ENCODE measurements at regions of chr1 and their contacts with region 1.

Region 1: DNA sequence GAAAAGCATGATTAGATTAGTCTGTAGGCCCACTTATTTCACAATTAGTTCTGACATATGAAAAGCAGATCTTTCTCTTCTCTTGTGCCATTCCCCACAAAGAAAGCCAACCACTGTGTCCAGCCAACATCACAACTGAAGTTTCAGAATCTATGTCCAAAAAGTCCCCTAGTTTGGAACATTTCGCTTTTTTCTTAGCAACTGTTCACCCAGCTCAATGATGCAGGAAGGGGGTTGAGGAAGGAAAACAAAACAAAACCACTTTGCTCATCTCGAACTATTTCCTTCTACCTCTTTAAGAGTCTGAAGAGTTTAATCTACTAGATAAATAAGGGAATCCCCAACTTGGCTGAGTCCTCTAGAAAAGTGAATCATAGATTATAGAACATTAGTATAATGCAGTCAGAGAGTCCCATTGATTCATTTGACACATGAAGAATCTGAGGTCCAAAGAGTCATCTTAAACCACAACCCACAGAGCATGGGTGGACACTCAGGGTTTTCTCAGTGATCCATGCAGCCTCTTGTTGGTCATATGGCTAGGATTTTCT is 159.3 kb upstream of the SGIP1 start:
- DNase-seq: peak; percentile 96
- ATAC-seq: peak; percentile 66
- H3K4me3 ChIP-seq: no peak overlapping the region
- H3K27ac ChIP-seq: peak overlapping the region; percentile 92
- H3K4me1 ChIP-seq: peaks cover 65% of the 10 kb centered on the region
- H3K27me3 ChIP-seq: no peaks in the 10 kb centered on the region
- CTCF ChIP-seq: no peak
- EP300 ChIP-seq: peak; percentile 75 to 85; a peak in 3 of 4 replicates
- POLR2A ChIP-seq: no peak
- RAD21 ChIP-seq: peak; percentile 16

Region 2: GRCh38 chr1:66262211-66262963 is 112.2 kb before region 1 on chr1:
- CTCF ChIA-PET with region 1: interaction called, 15 read pairs
- POLR2A ChIA-PET with region 1: no interaction called
- RAD21 ChIA-PET with region 1: interaction called, 3 read pairs
- SMC1A ChIA-PET with region 1: interaction called, 75 read pairs
- in situ Hi-C with region 1: no loop called
- intact Hi-C with region 1: no loop called
- DNase-seq: no peak
- ATAC-seq: no peak
- H3K4me3 ChIP-seq: no peak overlapping the region
- H3K27ac ChIP-seq: no peak overlapping the region
- H3K4me1 ChIP-seq: peaks cover 4% of the 10 kb centered on the region; the same call in 1 of the 2 replicates
- H3K27me3 ChIP-seq: no peaks in the 10 kb centered on the region
- CTCF ChIP-seq: no peak
- EP300 ChIP-seq: no peak
- POLR2A ChIP-seq: no peak
- RAD21 ChIP-seq: no peak

Region 3: GRCh38 chr1:66339944-66340343 is 34.7 kb before region 1 on chr1:
- CTCF ChIA-PET with region 1: interaction called, 29 read pairs
- POLR2A ChIA-PET with region 1: interaction called, 6 read pairs
- RAD21 ChIA-PET with region 1: interaction called, 113 read pairs
- SMC1A ChIA-PET with region 1: interaction called, 463 read pairs
- in situ Hi-C with region 1: no loop called
- intact Hi-C with region 1: loop called (anchors 2 kb)
- DNase-seq: no peak
- ATAC-seq: peak; percentile 8
- H3K4me3 ChIP-seq: peak overlapping the region; percentile 42
- H3K27ac ChIP-seq: peak overlapping the region; percentile 83
- H3K4me1 ChIP-seq: peaks cover 21% of the 10 kb centered on the region
- H3K27me3 ChIP-seq: no peaks in the 10 kb centered on the region
- CTCF ChIP-seq: no peak
- EP300 ChIP-seq: no peak
- POLR2A ChIP-seq: no peak
- RAD21 ChIP-seq: no peak

Region 4: GRCh38 chr1:66396212-66396890 is 21.7 kb after region 1 on chr1:
- CTCF ChIA-PET with region 1: interaction called, 32 read pairs
- POLR2A ChIA-PET with region 1: interaction called, 19 read pairs
- RAD21 ChIA-PET with region 1: interaction called, 74 read pairs
- SMC1A ChIA-PET with region 1: interaction called, 253 read pairs
- in situ Hi-C with region 1: no loop called
- intact Hi-C with region 1: loop called (anchors 1 kb)
- DNase-seq: peak; percentile 71
- ATAC-seq: peak; percentile 76
- H3K4me3 ChIP-seq: no peak overlapping the region
- H3K27ac ChIP-seq: peak overlapping the region; percentile 80
- H3K4me1 ChIP-seq: peaks cover 75% of the 10 kb centered on the region
- H3K27me3 ChIP-seq: no peaks in the 10 kb centered on the region
- CTCF ChIP-seq: no peak
- EP300 ChIP-seq: peak in 1 of 2 experiments; percentile 52; a peak in 2 of 4 replicates
- POLR2A ChIP-seq: no peak
- RAD21 ChIP-seq: no peak; the same call in 1 of the 2 replicates

Region 5: GRCh38 chr1:66831529-66832239 is 457.0 kb after region 1 on chr1:
- CTCF ChIA-PET with region 1: no interaction called
- POLR2A ChIA-PET with region 1: no interaction called
- RAD21 ChIA-PET with region 1: no interaction called
- SMC1A ChIA-PET with region 1: no interaction called
- in situ Hi-C with region 1: no loop called
- intact Hi-C with region 1: no loop called
- DNase-seq: no peak
- ATAC-seq: no peak
- H3K4me3 ChIP-seq: no peak overlapping the region
- H3K27ac ChIP-seq: no peak overlapping the region
- H3K4me1 ChIP-seq: no peaks in the 10 kb centered on the region
- H3K27me3 ChIP-seq: no peaks in the 10 kb centered on the region
- CTCF ChIP-seq: no peak
- EP300 ChIP-seq: no peak
- POLR2A ChIP-seq: no peak
- RAD21 ChIP-seq: no peak

Region 6: DNA sequence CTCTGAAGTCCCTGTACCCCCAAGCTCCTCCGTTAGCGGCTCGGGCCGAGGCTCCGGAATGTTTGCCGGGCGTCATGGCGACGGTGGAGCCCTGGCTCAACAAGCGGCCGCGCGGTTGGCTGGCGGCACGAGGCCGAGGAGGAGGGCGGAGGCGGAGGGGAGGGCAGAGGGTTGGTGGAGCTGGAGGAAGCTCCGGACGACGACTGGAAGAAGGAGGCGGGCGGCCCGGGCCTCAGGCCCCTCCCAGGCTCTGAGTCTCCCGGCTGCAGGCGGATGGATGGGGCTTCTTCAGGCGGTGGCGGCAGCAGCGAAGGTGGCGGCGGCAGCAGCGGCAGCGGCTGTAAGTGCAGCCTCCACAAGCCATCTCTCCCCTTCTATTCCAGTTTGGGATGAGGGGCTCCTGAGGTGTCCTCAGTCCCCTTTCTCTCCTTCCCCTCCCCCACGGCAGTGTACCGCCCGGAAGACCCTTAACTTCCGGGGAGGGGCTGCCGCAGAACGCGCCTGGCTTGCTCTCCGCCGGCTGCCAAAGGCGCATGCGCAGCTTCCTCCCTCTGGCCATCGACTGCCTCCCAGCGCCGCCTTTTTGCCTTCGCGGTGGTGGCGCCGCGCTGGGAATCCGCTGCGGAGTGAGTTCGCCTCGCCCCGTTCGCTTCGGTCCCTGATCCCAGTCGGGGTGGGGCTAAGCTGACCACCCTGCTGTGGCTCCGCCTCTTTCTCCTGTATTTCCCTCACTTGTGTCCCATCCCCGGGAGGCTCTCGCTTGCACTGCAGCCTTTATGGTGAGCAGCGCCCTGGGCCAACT is 550.3 kb after region 1 on chr1 and contains the starts of genes DNAI4 and MIER1:
- CTCF ChIA-PET with region 1: no interaction called
- POLR2A ChIA-PET with region 1: no interaction called
- RAD21 ChIA-PET with region 1: no interaction called
- SMC1A ChIA-PET with region 1: no interaction called
- in situ Hi-C with region 1: loop called (anchors 25 kb)
- intact Hi-C with region 1: loop called (anchors 10 kb)
- DNase-seq: peak; percentile 87
- ATAC-seq: peak; percentile 96
- H3K4me3 ChIP-seq: peak within 1 kb of the TSS; percentile 79
- H3K27ac ChIP-seq: peak within 1 kb of the TSS; percentile 83
- H3K4me1 ChIP-seq: peaks cover 10% of the 10 kb centered on the region; the same call in 1 of the 2 replicates
- H3K27me3 ChIP-seq: no peaks in the 10 kb centered on the region
- CTCF ChIP-seq: peak; percentile 14 to 30 (median 21); a peak in 3 of 6 replicates
- EP300 ChIP-seq: no peak
- POLR2A ChIP-seq: peak; percentile 85
- RAD21 ChIP-seq: no peak
- polyA plus RNA-seq, gene DNAI4: 0.15 to 0.21 TPM
- polyA plus RNA-seq, gene MIER1: 16.1 to 24.6 TPM

Measured in GM12878 (cell line).